ENCODE measurements at regions of chr13 and their contacts with region 1.

Region 1: DNA sequence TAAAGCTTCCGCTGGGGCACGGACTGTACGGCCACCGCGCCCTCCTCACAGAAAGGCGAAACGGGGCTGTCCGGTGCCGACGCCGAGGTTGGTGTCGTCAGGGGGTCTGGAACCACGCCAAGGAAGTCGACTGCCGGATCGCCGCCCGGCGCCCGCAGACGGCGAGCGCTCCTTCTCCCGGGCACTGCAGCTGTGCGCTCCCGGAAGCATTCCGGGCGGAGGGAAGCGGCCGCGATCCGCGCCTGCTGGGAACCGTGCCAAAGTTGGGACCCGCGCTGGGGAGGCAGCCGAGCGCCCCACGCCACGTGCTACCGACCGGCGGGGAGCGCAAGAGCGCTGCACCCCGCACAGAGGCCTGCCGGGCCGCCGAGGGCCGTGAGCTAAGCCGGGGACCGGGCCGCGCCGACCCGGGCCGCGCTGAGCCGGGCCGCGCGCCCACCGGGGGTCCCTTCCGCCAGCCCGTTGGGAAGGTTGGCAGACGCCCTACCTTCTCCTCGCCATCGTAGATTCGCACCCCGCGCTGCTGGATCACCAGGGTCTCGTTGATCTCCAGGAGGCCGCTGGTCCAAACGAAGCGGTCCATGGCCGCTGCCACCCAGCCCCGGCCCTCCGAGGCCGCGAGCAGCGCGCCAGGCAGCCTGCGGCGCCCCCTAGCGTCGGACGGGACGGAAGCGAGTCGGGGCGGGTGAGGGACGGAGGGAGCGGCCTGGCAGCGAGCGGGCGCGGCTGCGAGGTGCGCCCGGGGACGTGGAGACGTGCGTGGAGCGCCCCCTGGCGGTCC is at the start of gene VPS36:
- DNase-seq: peak; percentile 85 to 99 (median 95)
- ATAC-seq: peak; percentile 85
- H3K4me3 ChIP-seq: peak within 1 kb of the TSS; percentile 92
- H3K4me3 Mint-ChIP-seq: peak within 1 kb of the TSS; percentile 80 to 98 (median 94)
- H3K27ac ChIP-seq: peak within 1 kb of the TSS; percentile 88
- H3K27ac Mint-ChIP-seq: peak within 1 kb of the TSS; percentile 58 to 96 (median 90)
- H3K4me1 ChIP-seq: peaks cover 26 to 27% of the 10 kb centered on the region in 2 donors
- H3K4me1 Mint-ChIP-seq: peaks cover 17 to 52% (median 45%) of the 10 kb centered on the region in 7 donors
- H3K27me3 ChIP-seq: no peaks in the 10 kb centered on the region
- H3K27me3 Mint-ChIP-seq: peaks cover 0 to 3% (median 0%) of the 10 kb centered on the region in 5 donors
- total RNA-seq, gene VPS36: 40.4 to 53.7 (median 49.5) TPM

Region 2: GRCh38 chr13:51825165-51825592 is 625.0 kb before region 1 on chr13:
- CTCF ChIA-PET with region 1: no interaction called
- POLR2A ChIA-PET with region 1: interaction called, 3 read pairs
- intact Hi-C with region 1: loop called in 1 of 2 experiments (anchors 2 kb)
- DNase-seq: peak in 7 of 9 donors; percentile 62 to 90 (median 84)
- ATAC-seq: peak; percentile 81
- H3K4me3 ChIP-seq: peak overlapping the region; percentile 75
- H3K4me3 Mint-ChIP-seq: peak overlapping the region; percentile 62 to 100 (median 97)
- H3K27ac ChIP-seq: peak overlapping the region; percentile 85
- H3K27ac Mint-ChIP-seq: peak overlapping the region; percentile 86 to 99 (median 95)
- H3K4me1 ChIP-seq: peaks cover 61 to 78% of the 10 kb centered on the region in 2 donors
- H3K4me1 Mint-ChIP-seq: peaks cover 57 to 80% (median 63%) of the 10 kb centered on the region in 7 donors
- H3K27me3 ChIP-seq: no peaks in the 10 kb centered on the region
- H3K27me3 Mint-ChIP-seq: peaks cover 0 to 10% (median 0%) of the 10 kb centered on the region in 5 donors

Region 3: DNA sequence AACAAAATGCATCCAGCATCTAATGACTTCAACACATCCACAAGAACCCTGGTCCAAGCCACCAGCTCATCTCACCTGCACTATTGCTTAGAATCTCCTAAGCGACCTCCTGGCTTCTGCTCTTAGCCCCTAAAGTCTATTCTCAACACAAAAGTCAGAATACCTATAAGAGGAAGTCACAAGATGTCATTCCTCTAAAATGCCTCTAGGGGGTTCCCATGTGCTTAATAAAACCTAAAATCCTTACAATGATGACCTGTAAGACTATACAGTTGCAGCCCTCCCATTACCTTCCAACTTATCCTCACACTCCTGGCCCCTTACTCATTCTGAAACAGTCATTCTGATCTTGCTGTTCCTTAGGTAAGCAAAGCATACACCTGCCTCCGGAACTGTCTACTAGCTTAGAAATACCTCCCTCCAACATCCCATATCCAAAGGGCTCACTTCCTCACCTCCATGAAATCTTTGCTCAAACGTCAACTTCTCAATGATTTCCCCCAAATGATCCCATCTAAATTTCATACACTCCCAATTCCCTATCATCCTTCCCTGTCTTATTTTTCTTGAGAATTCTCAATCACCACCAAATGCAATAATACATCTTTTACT is 449.0 kb before region 1 on chr13:
- CTCF ChIA-PET with region 1: no interaction called
- POLR2A ChIA-PET with region 1: no interaction called
- intact Hi-C with region 1: loop called in 1 of 2 experiments (anchors 1 kb)
- DNase-seq: peak in 6 of 9 donors; percentile 16 to 49 (median 38)
- ATAC-seq: peak; percentile 83
- H3K4me3 ChIP-seq: no peak overlapping the region
- H3K4me3 Mint-ChIP-seq: no peak overlapping the region
- H3K27ac ChIP-seq: no peak overlapping the region
- H3K27ac Mint-ChIP-seq: no peak overlapping the region
- H3K4me1 ChIP-seq: no peaks in the 10 kb centered on the region
- H3K4me1 Mint-ChIP-seq: peaks cover 0 to 7% (median 4%) of the 10 kb centered on the region in 7 donors
- H3K27me3 ChIP-seq: no peaks in the 10 kb centered on the region
- H3K27me3 Mint-ChIP-seq: peaks cover 0 to 35% (median 4%) of the 10 kb centered on the region in 5 donors

Region 4: GRCh38 chr13:52159321-52160086 is 290.7 kb before region 1 on chr13 and contains the start of gene NEK3:
- CTCF ChIA-PET with region 1: no interaction called
- POLR2A ChIA-PET with region 1: no interaction called
- intact Hi-C with region 1: loop called in 1 of 2 experiments (anchors 1 kb)
- DNase-seq: peak; percentile 32 to 69 (median 51)
- ATAC-seq: peak; percentile 83
- H3K4me3 ChIP-seq: peak within 1 kb of the TSS; percentile 69
- H3K4me3 Mint-ChIP-seq: peak within 1 kb of the TSS; percentile 86 to 92 (median 90)
- H3K27ac ChIP-seq: peak within 1 kb of the TSS; percentile 61
- H3K27ac Mint-ChIP-seq: peak within 1 kb of the TSS; percentile 62 to 94 (median 86)
- H3K4me1 ChIP-seq: peaks cover 6 to 15% of the 10 kb centered on the region in 2 donors
- H3K4me1 Mint-ChIP-seq: peaks cover 16 to 55% (median 51%) of the 10 kb centered on the region in 7 donors
- H3K27me3 ChIP-seq: no peaks in the 10 kb centered on the region
- H3K27me3 Mint-ChIP-seq: peaks cover 0 to 5% (median 0%) of the 10 kb centered on the region in 5 donors
- total RNA-seq, gene NEK3: 4.4 to 7.8 (median 4.5) TPM

Region 5: GRCh38 chr13:52348071-52348470 is 102.1 kb before region 1 on chr13:
- CTCF ChIA-PET with region 1: interaction called, 11 read pairs
- POLR2A ChIA-PET with region 1: no interaction called
- intact Hi-C with region 1: loop called (anchors 1 kb)
- DNase-seq: no peak
- ATAC-seq: no peak
- H3K4me3 ChIP-seq: no peak overlapping the region
- H3K4me3 Mint-ChIP-seq: no peak overlapping the region
- H3K27ac ChIP-seq: no peak overlapping the region
- H3K27ac Mint-ChIP-seq: no peak overlapping the region
- H3K4me1 ChIP-seq: no peaks in the 10 kb centered on the region
- H3K4me1 Mint-ChIP-seq: no peaks in the 10 kb centered on the region
- H3K27me3 ChIP-seq: no peaks in the 10 kb centered on the region
- H3K27me3 Mint-ChIP-seq: peaks cover 8 to 17% (median 15%) of the 10 kb centered on the region in 5 donors

Region 6: GRCh38 chr13:52414963-52415362 is 35.2 kb before region 1 on chr13:
- CTCF ChIA-PET with region 1: interaction called, 5 read pairs
- POLR2A ChIA-PET with region 1: no interaction called
- intact Hi-C with region 1: loop called in 1 of 2 experiments (anchors 5 kb)
- DNase-seq: no peak
- ATAC-seq: no peak
- H3K4me3 ChIP-seq: no peak overlapping the region
- H3K4me3 Mint-ChIP-seq: no peak overlapping the region
- H3K27ac ChIP-seq: no peak overlapping the region
- H3K27ac Mint-ChIP-seq: no peak overlapping the region
- H3K4me1 ChIP-seq: no peaks in the 10 kb centered on the region
- H3K4me1 Mint-ChIP-seq: peaks cover 0 to 2% (median 0%) of the 10 kb centered on the region in 7 donors
- H3K27me3 ChIP-seq: no peaks in the 10 kb centered on the region
- H3K27me3 Mint-ChIP-seq: no peaks in the 10 kb centered on the region

Region 7: GRCh38 chr13:52617070-52618060 is 167.2 kb after region 1 on chr13:
- CTCF ChIA-PET with region 1: no interaction called
- POLR2A ChIA-PET with region 1: interaction called, 7 read pairs
- intact Hi-C with region 1: loop called (anchors 1 kb)
- DNase-seq: peak; percentile 61 to 85 (median 81)
- ATAC-seq: peak; percentile 97
- H3K4me3 ChIP-seq: peak overlapping the region; percentile 90
- H3K4me3 Mint-ChIP-seq: peak overlapping the region; percentile 86 to 100 (median 99)
- H3K27ac ChIP-seq: peak overlapping the region; percentile 76
- H3K27ac Mint-ChIP-seq: peak overlapping the region; percentile 95 to 97 (median 96)
- H3K4me1 ChIP-seq: peaks cover 0 to 13% of the 10 kb centered on the region in 2 donors
- H3K4me1 Mint-ChIP-seq: peaks cover 19 to 57% (median 39%) of the 10 kb centered on the region in 7 donors
- H3K27me3 ChIP-seq: no peaks in the 10 kb centered on the region
- H3K27me3 Mint-ChIP-seq: peaks cover 0 to 8% (median 0%) of the 10 kb centered on the region in 5 donors

Measured in naive thymus-derived CD4-positive, alpha-beta T cell (primary cell).